HEK293T (cell line): ENCODE measurements at regions of chr2 and their contacts with region 1.

Region 1: DNA sequence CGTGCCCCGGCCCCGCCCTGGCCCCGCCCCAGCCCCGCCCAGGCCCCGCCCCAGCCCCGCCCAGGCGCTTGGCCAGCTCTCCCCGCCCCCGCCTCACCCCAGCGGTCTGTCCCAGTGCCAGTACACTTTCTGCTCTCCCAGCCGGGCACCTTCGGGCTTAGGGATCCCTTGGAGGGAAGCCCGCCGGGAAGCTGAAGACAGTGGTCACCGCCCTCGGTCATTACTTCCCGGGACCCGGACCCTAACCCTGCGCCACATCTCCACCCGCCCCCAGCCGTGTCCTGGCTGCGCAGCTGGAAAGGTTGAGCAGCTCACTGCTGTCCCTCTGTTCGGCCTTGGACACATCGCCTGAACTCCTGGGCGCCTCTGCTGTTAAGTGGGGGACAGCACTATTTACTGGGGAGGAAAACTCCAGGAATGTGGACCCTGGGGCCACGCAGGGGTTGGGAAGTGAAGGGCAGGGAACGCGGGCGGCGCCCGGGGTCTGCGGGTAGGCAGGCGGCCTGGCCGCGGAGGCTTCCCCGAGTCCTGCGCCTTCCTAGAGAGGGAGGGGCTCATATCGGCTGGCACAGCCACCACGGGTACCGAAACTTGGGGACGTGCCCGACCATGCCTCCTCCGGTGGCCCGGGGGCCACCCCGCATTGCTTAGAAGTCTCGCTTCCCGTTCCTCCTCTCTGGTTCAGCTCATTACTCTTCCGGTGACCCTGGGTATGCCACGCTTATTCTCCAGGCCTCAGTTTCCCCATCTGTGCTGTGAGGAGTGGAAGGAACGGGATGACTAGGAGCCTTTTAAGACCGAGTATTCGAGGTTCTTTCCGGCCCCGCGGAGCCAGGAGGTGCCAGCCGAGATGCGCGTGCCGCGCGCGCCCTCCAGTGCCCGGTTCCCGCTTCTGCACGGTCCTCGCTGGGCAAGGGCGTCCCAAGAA is 121.0 kb downstream of the GYPC start:
- DNase-seq: peak; percentile 72

Region 2: DNA sequence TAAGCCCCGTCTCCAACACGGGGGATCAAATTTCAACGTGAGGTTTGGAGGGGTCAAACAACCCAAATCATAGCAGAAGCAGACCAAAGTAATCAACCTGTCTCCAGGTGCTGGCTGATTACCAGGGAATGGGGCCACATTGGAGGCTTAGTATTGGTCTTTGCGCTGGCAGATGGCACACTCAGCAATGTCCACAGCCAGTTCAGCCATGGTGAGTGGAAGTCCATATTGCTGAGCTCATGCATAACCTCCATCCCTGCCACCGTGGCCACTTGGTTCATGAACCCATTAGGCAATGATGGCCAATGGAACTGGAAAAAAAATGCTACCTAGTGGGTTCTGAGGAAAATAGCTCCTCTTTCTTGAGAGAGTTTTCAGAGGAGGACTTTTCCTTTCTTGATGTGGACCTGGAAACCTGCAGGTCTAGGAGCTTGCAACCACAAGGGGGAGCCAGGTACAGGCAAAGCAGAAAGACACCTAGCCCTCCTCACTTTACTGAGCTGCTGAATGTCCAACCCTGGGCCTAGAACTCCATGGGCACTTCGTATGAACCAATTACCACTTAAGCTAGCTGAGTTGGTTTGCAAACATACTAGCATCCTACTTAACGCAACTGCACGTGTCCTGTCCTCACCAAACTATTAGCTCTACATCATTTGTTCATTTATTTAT is 249.0 kb before region 1 on chr2:
- CTCF ChIA-PET with region 1: interaction called, 18 read pairs
- POLR2A ChIA-PET with region 1: no interaction called
- DNase-seq: peak; percentile 63

Region 3: DNA sequence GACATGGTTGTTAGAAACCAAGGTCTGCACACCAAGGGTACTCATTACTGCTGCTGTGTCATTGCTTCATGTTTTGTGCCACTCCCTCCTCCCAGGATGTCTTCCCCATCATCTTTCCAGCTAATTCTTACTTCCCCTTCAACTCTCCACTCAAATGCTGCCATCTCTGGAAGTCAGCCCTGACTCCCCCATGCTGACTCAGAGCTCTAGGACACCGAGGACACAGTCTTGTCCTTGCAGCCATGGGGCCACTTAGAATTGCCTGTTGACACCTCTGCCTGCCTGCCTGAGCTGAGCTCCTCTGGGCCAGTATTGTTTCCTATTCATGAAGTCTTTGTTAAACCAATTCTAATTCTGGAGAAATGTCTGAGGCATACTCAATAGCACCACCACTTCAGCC is 20.8 kb before region 1 on chr2:
- CTCF ChIA-PET with region 1: no interaction called
- POLR2A ChIA-PET with region 1: no interaction called
- DNase-seq: no peak

Region 4: DNA sequence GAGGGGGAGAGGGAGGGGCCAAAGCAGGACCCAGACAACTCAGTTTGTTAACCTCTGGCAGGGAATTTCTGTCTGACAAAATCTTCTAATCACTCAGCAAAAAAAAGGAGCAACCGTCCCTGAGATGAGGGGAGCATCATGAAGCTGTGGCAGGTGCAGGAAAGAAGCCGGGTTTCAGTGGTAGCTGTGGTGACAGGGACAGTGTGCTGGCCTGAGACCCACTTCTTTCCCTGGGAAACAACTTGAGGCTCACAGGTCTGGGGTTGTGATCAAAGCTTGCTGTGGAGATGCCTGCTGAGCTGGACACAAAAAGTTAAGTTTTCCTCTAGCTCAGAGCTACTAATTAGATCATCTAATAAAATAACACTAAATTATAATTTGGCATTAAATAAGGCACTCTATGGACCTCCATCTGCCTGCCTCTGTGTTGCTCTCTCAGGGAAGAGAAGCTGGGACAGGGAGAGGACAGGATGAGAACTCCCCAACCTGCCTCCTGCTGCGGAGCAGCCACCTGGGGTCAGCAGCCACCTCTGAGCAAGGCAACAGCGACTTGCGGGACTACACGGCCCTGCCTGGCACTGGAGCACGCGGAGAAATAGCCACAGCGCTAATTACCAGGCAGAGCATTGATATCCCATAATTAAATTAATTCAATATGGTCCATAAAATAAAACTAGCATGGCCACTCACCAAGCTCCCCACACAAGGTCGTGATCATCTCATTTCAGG is 17.1 kb after region 1 on chr2:
- CTCF ChIA-PET with region 1: no interaction called
- POLR2A ChIA-PET with region 1: no interaction called
- DNase-seq: no peak

Region 5: DNA sequence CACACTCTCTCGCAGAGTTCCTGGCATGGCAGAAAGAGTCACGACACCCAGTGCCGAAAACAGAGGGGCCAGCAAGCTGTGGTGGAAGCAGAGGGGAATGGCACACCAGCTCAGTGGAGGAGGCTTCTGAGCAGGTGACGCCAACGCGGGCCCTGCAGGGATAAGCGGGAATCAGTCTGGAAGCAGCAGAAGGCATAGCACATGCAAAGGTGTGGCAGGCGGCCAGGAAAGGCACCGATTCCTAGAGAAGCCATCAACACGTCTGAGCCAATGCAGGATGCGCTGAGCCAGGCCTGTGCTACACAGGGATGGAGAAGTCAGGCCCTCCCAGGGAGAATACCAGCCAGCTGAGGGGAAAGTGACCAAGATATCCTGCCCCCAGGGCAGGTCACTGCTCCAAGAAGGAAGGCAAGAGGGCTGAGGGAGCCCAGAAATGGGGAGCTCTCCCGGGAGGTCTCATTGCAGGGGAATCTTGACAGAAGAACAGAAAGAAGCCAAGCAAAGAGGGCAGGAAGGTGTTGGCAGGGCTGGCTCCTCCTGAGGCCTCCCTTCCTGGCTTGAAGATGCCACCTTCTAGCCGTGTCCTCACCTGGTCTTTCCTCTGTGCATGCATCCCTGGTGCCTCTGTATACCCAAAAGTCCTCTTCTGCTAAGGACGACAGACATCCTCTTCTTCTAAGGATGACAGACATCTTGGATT is 138.0 kb after region 1 on chr2:
- CTCF ChIA-PET with region 1: no interaction called
- POLR2A ChIA-PET with region 1: no interaction called
- DNase-seq: no peak